Ovary (tissue), 10 donors: ENCODE measurements at regions of chr15 and their contacts with region 1.

Region 1: DNA sequence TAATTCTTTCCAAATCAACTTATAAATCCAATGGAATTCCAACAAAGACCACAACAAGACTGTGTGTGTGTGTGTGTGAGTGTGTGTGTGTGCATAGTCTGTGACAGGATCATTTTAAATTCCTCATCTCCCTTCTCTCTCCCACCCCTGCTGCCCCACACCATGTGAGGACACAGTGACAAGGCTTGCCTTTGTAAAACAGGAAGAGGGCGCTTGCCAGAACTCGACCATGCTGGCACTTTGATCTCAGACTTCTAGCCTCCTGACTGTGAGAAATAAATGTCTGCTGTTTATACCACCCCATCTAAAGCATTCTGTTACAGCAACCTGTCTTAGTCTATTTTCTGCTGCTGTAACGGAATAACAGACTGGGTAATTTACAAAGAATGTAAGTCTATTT is 99.1 kb downstream of the NSMCE3 start:
- DNase-seq: no peak
- H3K4me3 ChIP-seq: no peak overlapping the region
- H3K27ac ChIP-seq: no peak overlapping the region
- H3K4me1 ChIP-seq: no peaks in the 10 kb centered on the region
- H3K27me3 ChIP-seq: no peaks in the 10 kb centered on the region
- CTCF ChIP-seq: no peak
- EP300 ChIP-seq: no peak
- POLR2A ChIP-seq: no peak

Region 2: GRCh38 chr15:29196290-29196689 is 25.8 kb after region 1 on chr15:
- intact Hi-C with region 1: no loop called
- DNase-seq: no peak
- H3K4me3 ChIP-seq: no peak overlapping the region
- H3K27ac ChIP-seq: no peak overlapping the region
- H3K4me1 ChIP-seq: no peaks in the 10 kb centered on the region
- H3K27me3 ChIP-seq: no peaks in the 10 kb centered on the region
- CTCF ChIP-seq: no peak
- EP300 ChIP-seq: no peak
- POLR2A ChIP-seq: no peak

Region 3: GRCh38 chr15:29233566-29233965 is 63.0 kb after region 1 on chr15:
- intact Hi-C with region 1: loop called in 1 of 4 experiments (anchors 10 kb)
- DNase-seq: no peak
- H3K4me3 ChIP-seq: no peak overlapping the region
- H3K27ac ChIP-seq: no peak overlapping the region
- H3K4me1 ChIP-seq: no peaks in the 10 kb centered on the region
- H3K27me3 ChIP-seq: no peaks in the 10 kb centered on the region
- CTCF ChIP-seq: no peak
- EP300 ChIP-seq: no peak
- POLR2A ChIP-seq: no peak

Region 4: GRCh38 chr15:29331669-29332068 is 161.1 kb after region 1 on chr15:
- intact Hi-C with region 1: no loop called
- DNase-seq: no peak
- H3K4me3 ChIP-seq: no peak overlapping the region
- H3K27ac ChIP-seq: no peak overlapping the region
- H3K4me1 ChIP-seq: no peaks in the 10 kb centered on the region
- H3K27me3 ChIP-seq: no peaks in the 10 kb centered on the region
- CTCF ChIP-seq: no peak
- EP300 ChIP-seq: no peak
- POLR2A ChIP-seq: no peak